Endothelial cell of umbilical vein (primary cell): ENCODE measurements at regions of chr13 and their contacts with region 1.

Region 1: GRCh38 chr13:98910501-98910951 is 67.3 kb downstream of the DOCK9 start:
- DNase-seq: peak; percentile 98
- H3K4me3 ChIP-seq: no peak overlapping the region
- H3K27ac ChIP-seq: peak overlapping the region; percentile 99
- H3K4me1 ChIP-seq: peaks cover 59% of the 10 kb centered on the region
- H3K27me3 ChIP-seq: no peaks in the 10 kb centered on the region
- CTCF ChIP-seq: no peak
- POLR2A ChIP-seq: peak; percentile 63

Region 2: DNA sequence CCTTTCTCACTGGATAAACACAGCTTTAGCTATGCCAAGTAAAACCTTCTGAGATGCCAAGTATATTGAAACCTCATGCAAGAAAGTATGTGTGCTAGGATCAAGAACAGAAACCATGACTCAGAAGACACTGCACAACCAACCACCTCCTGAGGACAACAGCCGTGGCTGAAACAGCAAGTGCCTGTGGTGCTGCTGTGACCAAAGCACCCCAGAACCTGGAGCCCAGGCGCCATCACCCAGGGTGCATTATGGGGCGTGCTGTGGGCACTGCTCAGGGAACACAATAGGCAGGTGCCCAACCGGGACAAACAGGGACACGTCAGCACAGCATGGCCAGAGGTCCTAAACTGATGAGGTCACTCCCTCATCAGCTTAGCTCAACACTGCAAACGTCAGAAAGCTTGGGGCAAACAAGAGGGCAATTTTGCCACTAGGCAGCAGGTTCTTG is 56.7 kb before region 1 on chr13:
- CTCF ChIA-PET with region 1: interaction called, 3 read pairs
- POLR2A ChIA-PET with region 1: no interaction called
- dilution Hi-C with region 1: no loop called
- intact Hi-C with region 1: loop called (anchors 1 kb)
- DNase-seq: no peak
- H3K4me3 ChIP-seq: no peak overlapping the region
- H3K27ac ChIP-seq: no peak overlapping the region
- H3K4me1 ChIP-seq: peaks cover 31% of the 10 kb centered on the region
- H3K27me3 ChIP-seq: no peaks in the 10 kb centered on the region
- CTCF ChIP-seq: no peak
- POLR2A ChIP-seq: no peak

Region 3: DNA sequence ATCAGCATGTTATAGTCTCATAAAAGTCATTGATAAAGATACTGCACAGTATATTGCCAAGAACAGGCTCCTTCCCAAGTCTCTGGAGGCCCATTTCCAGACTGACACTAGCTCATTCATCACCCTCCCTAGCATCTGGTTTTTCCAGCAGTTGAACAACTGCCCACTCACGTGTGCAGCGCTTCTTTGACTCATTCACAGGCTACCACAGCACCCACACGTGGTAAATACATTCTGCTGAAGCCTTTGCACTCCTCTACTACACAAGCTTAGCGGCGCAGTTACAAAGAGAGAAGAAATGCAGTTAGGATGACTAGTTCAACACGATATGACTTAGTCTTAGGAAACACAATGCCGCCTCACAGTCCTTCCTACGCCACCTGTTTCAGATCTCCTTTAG is 20.3 kb before region 1 on chr13:
- CTCF ChIA-PET with region 1: interaction called, 5 read pairs
- POLR2A ChIA-PET with region 1: no interaction called
- dilution Hi-C with region 1: no loop called
- intact Hi-C with region 1: loop called (anchors 2 kb)
- DNase-seq: peak; percentile 47
- H3K4me3 ChIP-seq: no peak overlapping the region
- H3K27ac ChIP-seq: peak overlapping the region; percentile 1
- H3K4me1 ChIP-seq: peaks cover 51% of the 10 kb centered on the region
- H3K27me3 ChIP-seq: no peaks in the 10 kb centered on the region
- CTCF ChIP-seq: no peak
- POLR2A ChIP-seq: no peak

Region 4: GRCh38 chr13:98959786-98960605 is 49.5 kb after region 1 on chr13:
- CTCF ChIA-PET with region 1: no interaction called
- POLR2A ChIA-PET with region 1: interaction called, 4 read pairs
- dilution Hi-C with region 1: no loop called
- intact Hi-C with region 1: loop called (anchors 1 kb)
- DNase-seq: peak; percentile 86
- H3K4me3 ChIP-seq: no peak overlapping the region
- H3K27ac ChIP-seq: peak overlapping the region; percentile 78
- H3K4me1 ChIP-seq: peaks cover 39% of the 10 kb centered on the region
- H3K27me3 ChIP-seq: no peaks in the 10 kb centered on the region
- CTCF ChIP-seq: no peak
- POLR2A ChIP-seq: no peak

Region 5: GRCh38 chr13:98977568-98978265 is 67.2 kb after region 1 on chr13 and contains the start of gene DOCK9:
- CTCF ChIA-PET with region 1: interaction called, 8 read pairs
- POLR2A ChIA-PET with region 1: interaction called, 8 read pairs
- dilution Hi-C with region 1: no loop called
- intact Hi-C with region 1: loop called (anchors 1 kb)
- DNase-seq: peak; percentile 89
- H3K4me3 ChIP-seq: peak within 1 kb of the TSS; percentile 47 to 100 (median 86)
- H3K27ac ChIP-seq: peak within 1 kb of the TSS; percentile 97
- H3K4me1 ChIP-seq: peaks cover 52% of the 10 kb centered on the region
- H3K27me3 ChIP-seq: no peaks in the 10 kb centered on the region
- CTCF ChIP-seq: no peak
- POLR2A ChIP-seq: peak; percentile 87
- total RNA-seq, gene DOCK9: 323 and 334 TPM in 2 replicates

Region 6: DNA sequence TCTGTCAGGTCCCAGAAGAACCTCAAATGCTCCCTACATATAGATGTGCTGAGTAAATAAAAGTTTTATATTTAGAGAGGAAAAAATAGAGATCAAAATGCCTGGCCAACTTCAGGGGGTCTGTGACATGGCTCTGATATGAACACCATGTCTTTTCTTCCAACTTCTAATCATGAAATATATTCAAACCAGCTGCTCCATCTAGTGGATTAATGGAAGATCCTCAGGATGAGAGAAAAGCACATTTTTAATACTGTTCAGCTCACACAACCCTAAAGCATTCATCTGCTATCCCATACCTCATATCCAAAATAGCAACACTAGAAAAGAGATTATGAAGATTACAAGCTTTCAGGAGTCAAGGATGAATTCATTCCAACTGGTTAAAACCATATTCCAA is 123.3 kb after region 1 on chr13:
- CTCF ChIA-PET with region 1: interaction called, 9 read pairs
- POLR2A ChIA-PET with region 1: no interaction called
- dilution Hi-C with region 1: no loop called
- intact Hi-C with region 1: loop called (anchors 1 kb)
- DNase-seq: peak; percentile 59
- H3K4me3 ChIP-seq: no peak overlapping the region
- H3K27ac ChIP-seq: no peak overlapping the region
- H3K4me1 ChIP-seq: peaks cover 8% of the 10 kb centered on the region
- H3K27me3 ChIP-seq: no peaks in the 10 kb centered on the region
- CTCF ChIP-seq: peak; percentile 29 to 38
- POLR2A ChIP-seq: no peak

Region 7: GRCh38 chr13:99661791-99662190 is 751.3 kb after region 1 on chr13:
- CTCF ChIA-PET with region 1: no interaction called
- POLR2A ChIA-PET with region 1: no interaction called
- dilution Hi-C with region 1: no loop called
- intact Hi-C with region 1: no loop called
- DNase-seq: no peak
- H3K4me3 ChIP-seq: no peak overlapping the region
- H3K27ac ChIP-seq: no peak overlapping the region
- H3K4me1 ChIP-seq: peaks cover 14% of the 10 kb centered on the region
- H3K27me3 ChIP-seq: peaks cover under 1 to 13% of the 10 kb centered on the region in 2 experiments
- CTCF ChIP-seq: no peak
- POLR2A ChIP-seq: no peak